A673 (cell line): ENCODE measurements at regions of chr22 and their contacts with region 1.

Region 1: DNA sequence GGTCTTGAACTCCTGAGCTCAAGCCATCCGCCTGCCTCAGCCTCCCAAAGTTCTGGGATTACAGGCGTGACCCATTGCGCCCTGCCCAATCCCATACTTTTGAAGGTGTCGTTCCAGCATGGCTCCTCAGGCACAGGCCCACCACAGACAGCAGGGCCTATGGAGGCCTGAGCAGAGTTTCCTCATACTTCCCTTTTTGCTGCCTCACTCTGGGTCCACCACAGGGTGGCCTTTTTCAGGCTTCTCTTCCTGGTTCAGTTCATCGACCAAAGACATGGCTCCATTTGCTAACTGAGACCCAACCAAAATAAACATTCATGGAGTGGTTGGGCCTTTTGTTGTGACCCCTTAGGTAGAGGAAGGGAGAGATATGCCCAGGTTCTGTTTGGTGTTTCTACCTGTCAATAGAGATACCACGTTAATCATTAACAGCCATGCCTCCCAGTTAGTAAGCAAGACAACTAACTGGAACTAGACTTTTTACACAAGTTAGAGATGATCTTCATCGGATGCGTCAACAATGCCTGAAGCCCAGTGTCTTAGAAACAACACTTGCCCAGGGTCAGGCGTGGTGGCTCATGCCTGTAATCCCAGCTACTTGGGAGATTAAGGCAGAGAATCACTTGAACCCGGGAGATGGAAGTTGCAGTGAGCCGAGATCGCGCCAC is 35.1 kb downstream of the TRIOBP start:
- DNase-seq: no peak
- H3K4me3 ChIP-seq: no peak overlapping the region
- H3K27ac ChIP-seq: no peak overlapping the region
- H3K4me1 ChIP-seq: peaks cover 11% of the 10 kb centered on the region
- H3K27me3 ChIP-seq: no peaks in the 10 kb centered on the region
- CTCF ChIP-seq: no peak

Region 2: DNA sequence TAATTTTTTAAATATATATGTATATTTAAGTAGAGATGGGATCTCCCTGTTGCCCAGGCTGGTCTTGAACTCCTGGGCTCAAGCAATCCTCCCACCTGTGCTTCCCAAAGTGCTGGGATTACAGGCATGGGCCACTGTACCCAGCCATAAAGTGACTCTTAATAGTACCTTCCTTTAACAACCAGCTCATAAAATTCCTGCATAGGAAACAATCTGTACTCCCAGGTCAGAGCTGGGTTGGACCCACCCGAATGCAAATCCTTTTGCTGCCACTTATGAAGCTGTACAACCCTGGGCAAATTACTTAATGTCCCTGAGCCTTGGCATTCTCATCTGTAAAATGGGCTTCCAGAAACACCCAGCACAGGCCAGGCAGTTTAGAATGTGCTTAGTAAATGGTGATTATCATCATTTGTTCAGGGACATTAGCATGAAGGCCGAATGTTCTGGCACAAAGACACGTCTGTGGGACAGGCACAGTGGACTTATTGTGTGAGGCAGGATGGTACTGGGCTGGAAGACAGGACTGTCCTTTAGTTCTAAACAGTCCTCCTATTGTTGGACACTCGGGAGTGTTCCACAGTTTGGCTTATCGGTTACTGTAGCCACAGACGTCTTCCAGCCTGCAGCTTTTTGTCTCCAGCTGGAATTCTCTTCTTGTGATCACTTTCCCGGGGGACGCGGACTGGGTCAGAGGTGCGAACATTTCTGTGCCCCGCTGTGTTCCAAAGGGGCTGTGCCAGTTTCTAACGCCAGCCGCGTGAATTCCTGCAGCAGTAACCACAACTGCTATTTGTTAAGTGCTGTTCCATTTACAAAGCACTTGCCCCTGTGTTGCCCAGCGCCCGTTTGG is 67.5 kb before region 1 on chr22:
- CTCF ChIA-PET with region 1: no interaction called
- POLR2A ChIA-PET with region 1: no interaction called
- intact Hi-C with region 1: no loop called
- DNase-seq: no peak
- H3K4me3 ChIP-seq: no peak overlapping the region
- H3K27ac ChIP-seq: no peak overlapping the region
- H3K4me1 ChIP-seq: peaks cover 21% of the 10 kb centered on the region
- H3K27me3 ChIP-seq: no peaks in the 10 kb centered on the region
- CTCF ChIP-seq: no peak

Region 3: DNA sequence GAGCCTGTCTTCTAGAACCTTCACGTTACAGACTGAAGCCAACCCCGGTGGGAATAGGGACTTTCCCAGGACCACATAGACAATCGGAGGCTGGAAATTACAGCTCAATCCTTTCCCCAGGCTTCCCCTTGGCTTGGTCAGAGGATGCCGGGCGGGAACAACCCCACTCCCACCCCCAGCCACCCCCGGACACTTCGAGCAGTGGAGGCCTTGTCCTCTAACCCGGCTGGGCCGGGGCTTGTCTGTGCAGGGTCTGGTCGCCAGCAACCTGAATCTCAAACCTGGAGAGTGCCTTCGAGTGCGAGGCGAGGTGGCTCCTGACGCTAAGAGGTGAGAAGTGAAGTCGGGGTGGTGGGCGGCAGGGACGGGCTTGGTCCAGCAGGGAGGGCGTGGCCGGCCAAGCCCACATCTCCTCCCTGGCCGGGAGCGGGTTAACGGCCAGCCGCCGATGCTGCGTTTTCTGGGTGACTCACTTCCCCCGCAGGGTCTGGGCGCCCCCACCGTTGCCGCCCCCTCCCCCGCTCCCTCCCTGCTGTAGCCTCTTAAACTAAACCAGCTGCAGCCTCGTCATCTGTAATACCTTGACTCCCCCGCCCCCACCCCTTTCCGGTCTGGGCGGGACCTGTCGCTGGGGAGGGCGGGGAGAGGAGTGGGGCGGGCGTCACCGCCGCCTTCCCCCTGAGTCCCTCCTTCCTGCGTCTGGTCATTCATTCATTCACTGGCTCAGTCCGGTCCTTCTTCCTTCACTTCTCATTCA is 55.0 kb before region 1 on chr22:
- CTCF ChIA-PET with region 1: no interaction called
- POLR2A ChIA-PET with region 1: no interaction called
- intact Hi-C with region 1: no loop called
- DNase-seq: peak; percentile 95
- H3K4me3 ChIP-seq: peak overlapping the region; percentile 59
- H3K27ac ChIP-seq: peak overlapping the region; percentile 92
- H3K4me1 ChIP-seq: peaks cover 24% of the 10 kb centered on the region
- H3K27me3 ChIP-seq: no peaks in the 10 kb centered on the region
- CTCF ChIP-seq: no peak

Region 4: GRCh38 chr22:37708580-37709444 is 23.1 kb before region 1 on chr22:
- CTCF ChIA-PET with region 1: no interaction called
- POLR2A ChIA-PET with region 1: interaction called, 11 read pairs
- intact Hi-C with region 1: no loop called
- DNase-seq: no peak
- H3K4me3 ChIP-seq: no peak overlapping the region
- H3K27ac ChIP-seq: no peak overlapping the region
- H3K4me1 ChIP-seq: no peaks in the 10 kb centered on the region
- H3K27me3 ChIP-seq: no peaks in the 10 kb centered on the region
- CTCF ChIP-seq: no peak

Region 5: GRCh38 chr22:37792494-37792893 is 60.6 kb after region 1 on chr22:
- CTCF ChIA-PET with region 1: no interaction called
- POLR2A ChIA-PET with region 1: no interaction called
- intact Hi-C with region 1: no loop called
- DNase-seq: no peak
- H3K4me3 ChIP-seq: no peak overlapping the region
- H3K27ac ChIP-seq: no peak overlapping the region
- H3K4me1 ChIP-seq: no peaks in the 10 kb centered on the region
- H3K27me3 ChIP-seq: no peaks in the 10 kb centered on the region
- CTCF ChIP-seq: no peak

Region 6: DNA sequence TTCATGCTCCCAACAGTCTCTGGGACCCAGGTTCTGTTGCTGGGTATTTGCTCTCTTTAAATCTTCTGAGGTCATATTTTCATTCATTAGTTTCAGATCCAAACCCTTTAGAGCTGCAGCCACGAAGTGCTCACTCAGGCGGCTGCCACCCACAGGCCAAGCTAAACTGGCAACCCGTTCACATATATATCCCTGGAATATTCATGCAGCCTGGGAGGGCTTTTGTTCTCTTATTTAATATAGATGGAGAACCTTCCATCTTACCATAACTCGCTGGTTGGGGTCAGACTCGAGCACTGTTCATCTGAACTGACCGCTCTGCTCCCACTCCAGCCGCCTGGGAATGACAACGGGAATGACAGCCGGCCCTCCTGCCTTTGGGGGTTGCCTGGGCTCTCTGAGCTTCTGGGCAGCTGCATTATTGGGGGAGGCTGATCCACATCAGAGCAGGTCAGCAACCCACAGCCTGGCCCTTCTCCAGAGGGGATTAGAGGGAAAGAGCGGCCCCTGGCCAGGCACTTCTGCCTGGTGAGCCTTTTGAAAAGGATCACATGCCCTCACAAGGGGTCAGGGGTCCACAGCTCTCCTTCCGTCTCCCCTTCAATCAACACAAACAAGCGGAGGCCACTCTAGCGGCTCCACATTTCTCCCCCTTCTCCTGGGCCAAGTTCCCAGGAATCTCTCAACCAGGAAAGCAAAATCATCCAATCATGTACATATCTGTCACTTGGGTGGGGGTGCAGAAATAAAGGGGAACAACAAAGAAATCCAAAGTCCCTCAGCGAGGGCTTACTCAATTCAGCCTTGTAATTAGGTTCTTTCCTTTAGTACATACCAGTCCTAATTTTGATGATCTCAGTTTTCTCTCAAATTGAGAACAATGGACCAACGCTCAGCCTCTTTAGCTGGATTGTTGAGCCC is 529.1 kb after region 1 on chr22:
- CTCF ChIA-PET with region 1: no interaction called
- POLR2A ChIA-PET with region 1: no interaction called
- intact Hi-C with region 1: no loop called
- DNase-seq: no peak
- H3K4me3 ChIP-seq: no peak overlapping the region
- H3K27ac ChIP-seq: no peak overlapping the region
- H3K4me1 ChIP-seq: peaks cover 7% of the 10 kb centered on the region
- H3K27me3 ChIP-seq: no peaks in the 10 kb centered on the region
- CTCF ChIP-seq: no peak